ENCODE measurements at regions of chr17 and their contacts with region 1.

Region 1: GRCh38 chr17:27236717-27237315 is 57.1 kb upstream of the WSB1 start:
- DNase-seq: peak; percentile 48
- ATAC-seq: peak; percentile 59
- H3K4me3 Mint-ChIP-seq: no peak overlapping the region
- H3K27ac Mint-ChIP-seq: no peak overlapping the region
- H3K4me1 Mint-ChIP-seq: peaks cover 54% of the 10 kb centered on the region
- H3K27me3 Mint-ChIP-seq: no peaks in the 10 kb centered on the region
- CTCF ChIP-seq: peak; percentile 97

Region 2: DNA sequence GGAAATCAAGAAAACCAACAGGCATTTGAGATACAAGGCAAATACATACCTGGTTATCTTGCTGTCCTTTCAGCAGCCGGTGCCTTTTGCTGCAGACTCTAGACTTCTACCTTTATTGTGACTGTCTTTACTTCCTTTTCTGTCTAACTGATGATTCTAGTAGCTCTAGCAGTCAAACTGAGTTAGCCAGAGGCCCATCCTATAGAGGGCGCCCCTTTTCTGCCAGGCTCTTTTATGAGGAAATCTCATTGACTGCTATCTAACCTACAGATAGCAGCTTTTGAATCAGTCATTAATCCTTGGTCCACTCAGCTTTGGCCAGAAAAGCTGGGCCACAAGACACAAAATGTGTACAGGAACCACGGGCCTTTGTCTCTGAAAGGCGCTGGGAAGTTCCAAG is 30.4 kb before region 1 on chr17:
- CTCF ChIA-PET with region 1: interaction called, 37 read pairs
- POLR2A ChIA-PET with region 1: interaction called, 5 read pairs
- intact Hi-C with region 1: no loop called
- DNase-seq: no peak
- ATAC-seq: peak; percentile 57
- H3K4me3 Mint-ChIP-seq: no peak overlapping the region
- H3K27ac Mint-ChIP-seq: no peak overlapping the region
- H3K4me1 Mint-ChIP-seq: peaks cover 16% of the 10 kb centered on the region
- H3K27me3 Mint-ChIP-seq: no peaks in the 10 kb centered on the region
- CTCF ChIP-seq: no peak

Region 3: DNA sequence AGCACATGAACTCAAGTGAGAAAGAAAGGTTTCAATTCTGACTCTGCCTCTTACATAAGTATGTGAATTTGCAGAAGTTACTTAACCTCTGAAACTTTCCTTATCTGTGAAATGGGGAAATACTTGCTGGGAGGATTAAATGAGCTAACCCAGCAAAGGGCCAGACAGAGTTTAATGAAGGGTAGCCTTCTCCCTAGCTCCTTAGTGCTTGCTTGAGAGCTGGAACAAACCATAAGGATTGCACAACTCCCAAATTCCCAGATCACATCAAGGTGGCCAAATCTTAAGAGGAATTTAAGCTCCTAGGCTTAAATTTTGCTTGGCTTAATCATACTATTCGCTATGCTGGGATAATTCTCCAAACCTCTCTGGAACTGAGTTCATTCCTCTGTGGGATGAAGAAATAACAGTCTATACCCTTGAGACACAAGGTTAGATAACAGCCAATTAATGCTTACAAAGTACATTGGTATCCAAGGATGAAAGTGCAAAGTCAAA is 45.3 kb after region 1 on chr17:
- CTCF ChIA-PET with region 1: interaction called, 17 read pairs
- POLR2A ChIA-PET with region 1: interaction called, 12 read pairs
- intact Hi-C with region 1: loop called (anchors 1 kb)
- DNase-seq: no peak
- ATAC-seq: peak; percentile 87
- H3K4me3 Mint-ChIP-seq: peak overlapping the region; percentile 33
- H3K27ac Mint-ChIP-seq: peak overlapping the region; percentile 88
- H3K4me1 Mint-ChIP-seq: peaks cover 58% of the 10 kb centered on the region
- H3K27me3 Mint-ChIP-seq: no peaks in the 10 kb centered on the region
- CTCF ChIP-seq: no peak

Region 4: GRCh38 chr17:27353461-27354050 is 116.7 kb after region 1 on chr17:
- CTCF ChIA-PET with region 1: interaction called, 21 read pairs
- POLR2A ChIA-PET with region 1: interaction called, 4 read pairs
- intact Hi-C with region 1: loop called (anchors 1 kb)
- DNase-seq: peak; percentile 90
- ATAC-seq: peak; percentile 87
- H3K4me3 Mint-ChIP-seq: peak overlapping the region; percentile 89
- H3K27ac Mint-ChIP-seq: peak overlapping the region; percentile 83
- H3K4me1 Mint-ChIP-seq: peaks cover 22% of the 10 kb centered on the region
- H3K27me3 Mint-ChIP-seq: no peaks in the 10 kb centered on the region
- CTCF ChIP-seq: peak; percentile 50

Region 5: GRCh38 chr17:27455914-27456680 is 219.3 kb after region 1 on chr17 and contains the start of gene KSR1:
- CTCF ChIA-PET with region 1: interaction called, 6 read pairs
- POLR2A ChIA-PET with region 1: no interaction called
- intact Hi-C with region 1: loop called (anchors 5 kb)
- DNase-seq: peak; percentile 81
- ATAC-seq: peak; percentile 94
- H3K4me3 Mint-ChIP-seq: peak within 1 kb of the TSS; percentile 92
- H3K27ac Mint-ChIP-seq: peak within 1 kb of the TSS; percentile 78
- H3K4me1 Mint-ChIP-seq: peaks cover 22% of the 10 kb centered on the region
- H3K27me3 Mint-ChIP-seq: no peaks in the 10 kb centered on the region
- CTCF ChIP-seq: no peak
- total RNA-seq, gene KSR1: 90.1 and 114 TPM in 2 replicates

Region 6: GRCh38 chr17:27944546-27945332 is 707.9 kb after region 1 on chr17:
- CTCF ChIA-PET with region 1: no interaction called
- POLR2A ChIA-PET with region 1: no interaction called
- intact Hi-C with region 1: no loop called
- DNase-seq: no peak
- ATAC-seq: peak; percentile 40
- H3K4me3 Mint-ChIP-seq: peak overlapping the region; percentile 35
- H3K27ac Mint-ChIP-seq: peak overlapping the region; percentile 79
- H3K4me1 Mint-ChIP-seq: peaks cover 37% of the 10 kb centered on the region
- H3K27me3 Mint-ChIP-seq: no peaks in the 10 kb centered on the region
- CTCF ChIP-seq: no peak

Measured in activated B cell treated with CpG ODN at 0.5 μM for 24 hours (primary cell).